ENCODE measurements at regions of chr10 and their contacts with region 1.

Region 1: GRCh38 chr10:29657719-29658274 is 23.0 kb upstream of the SVIL start:
- DNase-seq: peak in 10 of 35 experiments; percentile 8 to 68 (median 18)
- ATAC-seq: peak in 2 of 4 experiments; percentile 24 to 26
- H3K4me3 ChIP-seq: no peak overlapping the region
- H3K4me3 Mint-ChIP-seq: peak overlapping the region in 2 of 3 donors; percentile 4 to 64
- H3K27ac ChIP-seq: peak overlapping the region; percentile 31
- H3K27ac Mint-ChIP-seq: peak overlapping the region; percentile 18 to 50
- H3K4me1 ChIP-seq: peaks cover 6 to 31% of the 10 kb centered on the region in 2 experiments
- H3K4me1 Mint-ChIP-seq: peaks cover 31 to 48% (median 34%) of the 10 kb centered on the region in 3 donors
- H3K27me3 ChIP-seq: no peaks in the 10 kb centered on the region
- H3K27me3 Mint-ChIP-seq: no peaks in the 10 kb centered on the region

Region 2: GRCh38 chr10:29517352-29517923 is 140.4 kb before region 1 on chr10:
- CTCF ChIA-PET with region 1: no interaction called
- POLR2A ChIA-PET with region 1: no interaction called
- DNase-seq: no peak
- ATAC-seq: no peak
- H3K4me3 ChIP-seq: no peak overlapping the region
- H3K4me3 Mint-ChIP-seq: no peak overlapping the region
- H3K27ac ChIP-seq: no peak overlapping the region
- H3K27ac Mint-ChIP-seq: no peak overlapping the region
- H3K4me1 ChIP-seq: peaks cover 0 to 2% of the 10 kb centered on the region in 2 experiments
- H3K4me1 Mint-ChIP-seq: no peaks in the 10 kb centered on the region
- H3K27me3 ChIP-seq: no peaks in the 10 kb centered on the region
- H3K27me3 Mint-ChIP-seq: no peaks in the 10 kb centered on the region

Region 3: GRCh38 chr10:29646238-29646902 is 11.4 kb before region 1 on chr10:
- CTCF ChIA-PET with region 1: interaction called in 1 of 2 experiments, 10 read pairs
- POLR2A ChIA-PET with region 1: interaction called in 1 of 2 experiments, 17 read pairs
- DNase-seq: no peak
- ATAC-seq: peak in 1 of 4 experiments; percentile 50
- H3K4me3 ChIP-seq: no peak overlapping the region
- H3K4me3 Mint-ChIP-seq: peak overlapping the region; percentile 14 to 78 (median 15)
- H3K27ac ChIP-seq: peak overlapping the region; percentile 48
- H3K27ac Mint-ChIP-seq: peak overlapping the region; percentile 58 to 66
- H3K4me1 ChIP-seq: peaks cover 23 to 24% of the 10 kb centered on the region in 2 experiments
- H3K4me1 Mint-ChIP-seq: peaks cover 44 to 47% (median 47%) of the 10 kb centered on the region in 3 donors
- H3K27me3 ChIP-seq: peaks cover 0 to 4% of the 10 kb centered on the region in 2 experiments
- H3K27me3 Mint-ChIP-seq: no peaks in the 10 kb centered on the region

Measured in T-cell (primary cell).